ENCODE measurements at regions of chr1 and their contacts with region 1.

Region 1: DNA sequence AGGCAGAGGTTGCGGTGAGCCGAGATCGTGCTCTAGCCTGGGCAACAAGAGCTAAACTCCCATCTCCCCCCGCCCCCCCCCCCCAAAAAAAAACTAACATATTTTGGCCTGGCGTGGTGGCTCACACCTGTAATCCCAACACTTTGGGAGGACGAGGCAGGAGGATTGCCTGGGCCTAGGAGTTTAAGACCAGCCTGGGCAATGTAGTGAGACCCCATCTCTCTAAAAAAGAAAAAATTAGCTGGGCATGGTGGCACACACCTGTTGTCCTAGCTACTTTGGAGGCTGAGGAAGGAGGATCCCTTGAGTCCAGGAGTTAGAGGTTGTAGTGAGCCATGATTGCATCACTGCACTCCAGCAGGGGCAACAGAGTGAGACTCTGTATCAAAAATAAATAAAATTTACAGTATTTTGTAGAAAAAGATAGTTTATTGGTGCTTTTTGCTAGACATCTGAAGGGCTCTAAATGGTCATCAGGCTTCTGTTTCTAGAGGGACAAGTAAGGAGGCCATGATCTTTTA is 9.0 kb downstream of the YTHDF2 start:
- DNase-seq: no peak
- ATAC-seq: no peak
- H3K4me3 ChIP-seq: no peak overlapping the region
- H3K27ac ChIP-seq: no peak overlapping the region
- H3K4me1 ChIP-seq: peaks cover 10% of the 10 kb centered on the region
- H3K27me3 ChIP-seq: no peaks in the 10 kb centered on the region
- CTCF ChIP-seq: no peak

Region 2: DNA sequence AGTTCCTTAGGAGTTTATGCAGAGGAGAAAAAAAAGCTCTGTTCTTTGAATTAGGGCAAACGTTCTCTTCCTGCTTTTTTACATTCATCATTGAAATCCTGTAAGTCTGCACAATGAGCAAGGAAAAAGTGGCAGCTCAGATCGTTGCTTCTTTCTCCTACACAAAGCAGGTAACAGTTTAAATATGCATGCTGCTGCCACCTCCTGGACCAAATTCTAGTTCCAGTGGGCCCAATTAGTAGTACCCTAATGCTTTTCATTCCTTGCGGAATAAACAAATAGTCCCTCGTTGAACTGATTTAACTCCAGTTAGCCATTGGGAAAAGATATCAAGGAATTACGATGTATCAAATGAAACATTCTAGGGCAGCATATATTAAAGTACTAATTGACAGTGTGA is 11.1 kb after region 1 on chr1:
- CTCF ChIA-PET with region 1: no interaction called
- POLR2A ChIA-PET with region 1: interaction called, 17 read pairs
- in situ Hi-C with region 1: no loop called
- intact Hi-C with region 1: no loop called
- DNase-seq: no peak
- ATAC-seq: no peak
- H3K4me3 ChIP-seq: no peak overlapping the region
- H3K27ac ChIP-seq: no peak overlapping the region
- H3K4me1 ChIP-seq: no peaks in the 10 kb centered on the region
- H3K27me3 ChIP-seq: no peaks in the 10 kb centered on the region
- CTCF ChIP-seq: no peak

Region 3: DNA sequence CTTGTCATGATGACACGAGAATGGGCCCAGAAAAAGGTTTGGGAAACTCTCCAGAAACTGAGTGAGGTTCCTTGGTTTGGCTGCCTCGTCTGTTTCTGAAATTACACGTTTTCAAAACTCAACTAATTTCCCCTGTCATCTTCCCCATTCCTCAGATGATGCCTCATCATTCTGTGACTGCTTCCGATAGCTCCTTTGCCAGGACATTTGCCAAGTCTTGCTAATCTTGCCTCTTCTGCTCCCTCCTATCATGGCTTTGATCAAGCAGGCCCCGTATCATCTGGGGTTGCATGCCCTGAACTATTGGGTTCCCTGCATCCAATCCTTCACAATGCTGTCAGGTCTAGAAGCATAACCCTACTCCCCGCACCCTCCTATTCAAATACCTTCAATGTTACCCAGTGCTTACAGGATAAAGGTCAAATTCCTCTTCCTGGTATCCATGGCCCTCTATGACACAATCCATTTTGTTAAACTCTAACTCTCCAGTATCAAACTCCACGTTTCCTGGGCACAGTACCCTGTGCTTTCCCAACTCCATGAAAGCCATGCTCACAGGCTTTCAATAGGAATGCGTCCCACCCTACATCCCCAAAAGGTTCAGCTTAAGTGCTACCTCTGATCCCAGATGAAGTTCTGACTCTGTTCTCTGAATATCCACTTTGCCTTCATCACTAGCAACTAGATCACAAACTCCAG is 400.2 kb after region 1 on chr1:
- CTCF ChIA-PET with region 1: no interaction called
- POLR2A ChIA-PET with region 1: no interaction called
- in situ Hi-C with region 1: no loop called
- intact Hi-C with region 1: no loop called
- DNase-seq: no peak
- ATAC-seq: no peak
- H3K4me3 ChIP-seq: no peak overlapping the region
- H3K27ac ChIP-seq: no peak overlapping the region
- H3K4me1 ChIP-seq: no peaks in the 10 kb centered on the region
- H3K27me3 ChIP-seq: no peaks in the 10 kb centered on the region
- CTCF ChIP-seq: no peak

Measured in Panc1 (cell line).